Activated T-helper 2 cell treated with anti-CD3 and anti-CD28 coated beads, Interferon-gamma antibody, Interleukin-2, Interleukin-4, amounts not matched to agents 10 μg/mL and 5 μg/mL and 100 μg/mL, durations not matched to agents 14 hours and 24 hours and 36 hours (primary cell): ENCODE measurements at regions of chr3 and their contacts with region 1.

Region 1: DNA sequence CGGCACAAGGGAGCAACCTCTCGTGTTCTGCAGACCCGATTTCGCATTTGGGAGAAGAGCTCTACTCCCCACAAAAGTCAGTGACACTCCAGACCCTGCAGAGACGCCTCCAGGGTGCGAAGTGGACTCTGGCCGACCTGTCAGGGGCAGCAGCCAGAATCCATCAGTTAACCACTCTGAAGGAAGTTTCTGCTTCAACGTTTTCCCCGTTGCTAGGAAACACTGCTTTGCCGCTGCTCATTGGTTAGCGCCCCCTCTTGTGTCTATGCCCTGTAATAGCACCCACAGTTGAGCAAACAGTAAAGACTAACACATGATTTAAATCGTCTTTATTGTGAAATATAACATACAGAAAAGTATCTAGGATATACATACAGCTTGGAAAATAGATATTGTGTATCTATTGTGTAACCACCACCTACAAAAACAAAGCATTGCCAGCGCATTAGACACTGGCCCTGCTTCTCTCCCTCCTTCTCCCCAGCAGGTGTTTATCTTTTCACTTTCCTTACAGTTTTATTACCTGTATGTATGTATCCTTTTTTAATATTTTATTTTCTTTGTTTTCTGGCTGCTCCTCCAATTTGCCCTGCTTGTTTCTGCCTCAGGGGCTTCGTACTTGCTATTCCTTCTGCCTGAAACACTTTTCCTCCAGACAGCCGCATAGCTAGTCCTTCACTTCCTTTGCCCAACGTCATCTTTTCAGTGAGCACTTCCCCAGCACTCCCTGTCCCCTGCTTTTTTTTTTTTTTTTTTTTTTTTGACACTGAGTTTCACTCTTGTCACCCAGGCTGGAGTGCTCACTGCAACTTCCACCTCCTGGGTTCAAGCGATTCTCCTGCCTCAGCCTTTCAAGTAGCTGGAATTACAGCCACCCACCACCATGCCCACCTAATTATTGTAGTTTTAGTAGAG is 38.8 kb downstream of the TMEM40 start:
- DNase-seq: peak; percentile 62
- H3K4me3 Mint-ChIP-seq: peak overlapping the region; percentile 35
- H3K27ac Mint-ChIP-seq: no peak overlapping the region
- H3K4me1 Mint-ChIP-seq: peaks cover 8% of the 10 kb centered on the region
- H3K27me3 Mint-ChIP-seq: no peaks in the 10 kb centered on the region

Region 2: DNA sequence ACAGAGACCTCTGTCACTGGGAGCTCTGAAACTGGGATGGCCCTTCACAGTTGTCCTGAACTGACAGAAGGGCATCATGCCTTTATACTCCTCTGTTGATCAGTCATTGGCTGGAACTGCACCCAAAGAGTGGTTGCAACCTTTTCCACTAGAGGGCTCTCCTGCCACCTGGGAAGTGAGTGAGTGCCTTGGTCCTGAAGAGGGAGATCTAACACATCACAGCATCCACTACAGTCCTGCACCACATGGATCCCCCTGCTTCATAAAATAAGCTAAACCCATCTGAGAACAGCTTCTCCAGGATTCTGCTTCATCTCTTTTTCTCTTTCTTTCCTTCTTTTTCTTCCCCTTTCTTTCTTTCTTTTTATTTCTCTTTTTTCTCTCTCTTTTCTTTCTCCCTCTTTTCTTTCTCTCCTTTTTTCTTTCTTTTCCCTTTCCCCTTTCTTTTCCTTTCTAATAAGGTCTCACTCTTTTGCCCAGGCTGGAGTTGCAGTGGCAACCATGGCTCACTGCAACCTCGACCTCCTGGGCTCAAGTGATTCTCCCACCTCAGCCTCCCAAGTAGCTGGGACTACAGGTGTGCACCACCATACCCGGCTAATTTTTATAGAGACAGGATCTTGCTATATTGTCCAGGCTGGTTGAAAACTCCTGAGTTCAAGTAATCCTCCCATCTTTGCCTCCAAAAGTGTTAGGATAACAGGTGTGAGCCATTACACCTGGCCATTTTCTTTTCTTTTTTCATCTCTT is 13.6 kb before region 1 on chr3:
- intact Hi-C with region 1: loop called (anchors 2 kb)
- DNase-seq: peak; percentile 57
- H3K4me3 Mint-ChIP-seq: no peak overlapping the region
- H3K27ac Mint-ChIP-seq: no peak overlapping the region
- H3K4me1 Mint-ChIP-seq: no peaks in the 10 kb centered on the region
- H3K27me3 Mint-ChIP-seq: peaks cover 24% of the 10 kb centered on the region

Region 3: DNA sequence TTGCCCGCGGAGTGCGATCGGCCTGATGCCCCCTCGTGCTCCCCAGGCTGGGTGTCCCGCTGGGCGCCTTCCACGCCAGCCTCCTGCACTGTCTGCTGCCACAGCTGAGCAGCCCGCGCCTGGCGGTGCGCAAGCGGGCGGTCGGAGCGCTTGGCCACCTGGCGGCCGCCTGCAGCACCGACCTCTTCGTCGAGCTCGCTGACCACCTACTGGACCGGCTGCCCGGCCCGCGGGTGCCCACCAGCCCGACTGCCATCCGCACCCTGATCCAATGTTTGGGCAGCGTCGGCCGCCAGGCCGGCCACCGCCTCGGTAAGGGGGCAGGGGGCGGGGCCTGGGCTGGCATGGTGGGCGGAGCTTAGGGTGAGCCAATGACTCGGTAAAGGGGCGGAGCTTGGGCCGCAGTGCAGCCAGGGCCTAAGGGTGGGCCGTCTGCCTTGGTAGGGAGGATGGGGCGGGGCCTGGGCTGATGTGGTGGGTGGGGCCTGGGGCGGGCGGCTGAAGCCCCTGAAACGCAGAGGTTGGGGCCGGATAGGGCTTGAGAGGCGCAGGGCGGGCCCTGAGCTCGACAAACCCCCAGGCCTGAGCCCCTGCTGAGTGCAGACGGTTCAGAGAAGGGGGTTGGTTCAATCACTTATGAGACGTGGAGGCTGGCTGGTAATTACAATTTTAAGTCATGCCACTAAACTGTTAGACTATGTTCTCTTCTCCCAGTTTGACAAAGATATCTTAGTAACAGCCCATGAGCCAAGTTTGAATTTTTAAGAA is 90.0 kb after region 1 on chr3:
- intact Hi-C with region 1: no loop called
- DNase-seq: peak; percentile 85
- H3K4me3 Mint-ChIP-seq: peak overlapping the region; percentile 51
- H3K27ac Mint-ChIP-seq: no peak overlapping the region
- H3K4me1 Mint-ChIP-seq: peaks cover 3% of the 10 kb centered on the region
- H3K27me3 Mint-ChIP-seq: peaks cover 10% of the 10 kb centered on the region

Region 4: GRCh38 chr3:13346481-13347389 is 626.5 kb after region 1 on chr3:
- intact Hi-C with region 1: no loop called
- DNase-seq: peak; percentile 65
- H3K4me3 Mint-ChIP-seq: no peak overlapping the region
- H3K27ac Mint-ChIP-seq: peak overlapping the region; percentile 60
- H3K4me1 Mint-ChIP-seq: peaks cover 33% of the 10 kb centered on the region
- H3K27me3 Mint-ChIP-seq: no peaks in the 10 kb centered on the region